Activated CD4-positive, alpha-beta T cell treated with anti-CD3 and anti-CD28 coated beads for 36 hours (primary cell): ENCODE measurements at regions of chr11 and their contacts with region 1.

Region 1: GRCh38 chr11:116787786-116788486 is at the start of gene ZPR1:
- DNase-seq: peak; percentile 90
- ATAC-seq: peak; percentile 76
- H3K4me3 Mint-ChIP-seq: peak within 1 kb of the TSS; percentile 96
- H3K27ac Mint-ChIP-seq: peak within 1 kb of the TSS; percentile 88
- H3K4me1 Mint-ChIP-seq: peaks cover 52% of the 10 kb centered on the region
- H3K27me3 Mint-ChIP-seq: no peaks in the 10 kb centered on the region
- total RNA-seq, gene ZPR1: 88.8 to 106 TPM

Region 2: DNA sequence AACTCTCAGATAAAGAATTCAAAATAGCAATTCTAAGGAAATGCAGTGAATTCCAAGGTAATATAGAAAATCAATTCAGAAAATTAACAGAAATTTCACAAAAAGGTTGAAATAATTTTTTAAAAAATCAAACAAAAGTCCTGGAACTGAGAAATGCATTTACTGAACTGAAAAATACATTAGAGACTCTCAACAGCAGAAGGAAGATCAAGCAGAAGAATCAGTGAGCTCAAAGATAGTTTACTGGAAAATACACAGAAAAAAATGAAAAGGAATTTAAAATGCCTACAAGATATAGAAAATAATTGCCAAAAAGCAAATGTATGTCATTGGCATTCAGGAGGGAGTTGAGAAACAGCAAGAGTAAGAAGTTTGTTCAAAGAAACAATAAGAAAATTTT is 122.4 kb before region 1 on chr11:
- CTCF ChIA-PET with region 1: no interaction called
- POLR2A ChIA-PET with region 1: no interaction called
- intact Hi-C with region 1: no loop called
- DNase-seq: no peak
- ATAC-seq: no peak
- H3K4me3 Mint-ChIP-seq: no peak overlapping the region
- H3K27ac Mint-ChIP-seq: no peak overlapping the region
- H3K4me1 Mint-ChIP-seq: no peaks in the 10 kb centered on the region
- H3K27me3 Mint-ChIP-seq: peaks cover 42% of the 10 kb centered on the region

Region 3: DNA sequence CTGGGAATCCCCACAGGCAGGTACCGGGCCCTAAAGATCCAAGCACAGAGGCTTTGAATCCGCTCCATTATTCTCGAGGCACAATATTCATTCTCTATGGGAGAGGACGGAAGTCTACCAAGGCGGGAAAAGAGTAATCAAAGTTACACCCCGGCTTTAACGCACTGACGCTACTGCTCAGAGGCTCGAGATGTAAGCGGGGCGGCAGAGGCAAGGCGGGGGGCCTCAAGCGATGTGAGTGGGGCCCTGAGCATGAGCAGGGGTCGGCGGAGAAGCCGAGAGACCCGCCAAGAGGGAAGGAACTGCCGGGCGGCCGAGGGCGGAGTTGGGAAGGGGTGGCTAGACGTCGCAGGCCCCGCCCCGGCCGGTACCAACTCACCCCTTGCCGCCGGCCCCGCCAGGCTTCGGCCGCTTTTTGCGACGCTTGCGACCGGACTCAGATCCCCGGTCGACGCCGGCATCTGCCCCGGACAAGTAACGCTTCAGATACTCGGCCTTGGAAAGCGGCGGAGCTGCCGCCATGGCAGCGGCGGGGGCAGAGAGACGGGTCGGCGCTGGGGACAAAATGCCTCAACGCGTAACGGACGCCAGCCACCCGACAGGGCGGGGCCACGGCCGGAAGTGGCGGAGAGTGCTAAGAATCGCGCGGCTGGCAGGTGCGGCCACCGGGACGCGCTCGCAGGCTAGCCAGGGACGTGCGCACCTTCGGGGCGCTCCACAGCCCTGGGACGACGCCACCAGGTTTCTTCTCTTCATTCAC is 15.3 kb before region 1 on chr11 and contains the start of gene BUD13:
- CTCF ChIA-PET with region 1: interaction called, 25 read pairs
- POLR2A ChIA-PET with region 1: interaction called, 3 read pairs
- intact Hi-C with region 1: loop called (anchors 1 kb)
- DNase-seq: peak; percentile 97
- ATAC-seq: peak; percentile 91
- H3K4me3 Mint-ChIP-seq: peak within 1 kb of the TSS; percentile 95
- H3K27ac Mint-ChIP-seq: peak within 1 kb of the TSS; percentile 98
- H3K4me1 Mint-ChIP-seq: peaks cover 56% of the 10 kb centered on the region
- H3K27me3 Mint-ChIP-seq: no peaks in the 10 kb centered on the region
- total RNA-seq, gene BUD13: 30.2 to 35.6 TPM

Region 4: GRCh38 chr11:116813781-116814471 is 26.0 kb after region 1 on chr11:
- CTCF ChIA-PET with region 1: interaction called, 10 read pairs
- POLR2A ChIA-PET with region 1: no interaction called
- intact Hi-C with region 1: no loop called
- DNase-seq: no peak
- ATAC-seq: no peak
- H3K4me3 Mint-ChIP-seq: no peak overlapping the region
- H3K27ac Mint-ChIP-seq: no peak overlapping the region
- H3K4me1 Mint-ChIP-seq: no peaks in the 10 kb centered on the region
- H3K27me3 Mint-ChIP-seq: no peaks in the 10 kb centered on the region

Region 5: GRCh38 chr11:116879800-116880625 is 92.1 kb after region 1 on chr11:
- CTCF ChIA-PET with region 1: interaction called, 13 read pairs
- POLR2A ChIA-PET with region 1: no interaction called
- intact Hi-C with region 1: no loop called
- DNase-seq: no peak
- ATAC-seq: peak; percentile 65
- H3K4me3 Mint-ChIP-seq: no peak overlapping the region
- H3K27ac Mint-ChIP-seq: no peak overlapping the region
- H3K4me1 Mint-ChIP-seq: peaks cover 22% of the 10 kb centered on the region
- H3K27me3 Mint-ChIP-seq: no peaks in the 10 kb centered on the region

Region 6: GRCh38 chr11:117107701-117108590 is 320.0 kb after region 1 on chr11:
- CTCF ChIA-PET with region 1: interaction called, 72 read pairs
- POLR2A ChIA-PET with region 1: no interaction called
- intact Hi-C with region 1: loop called (anchors 1 kb)
- DNase-seq: no peak
- ATAC-seq: no peak
- H3K4me3 Mint-ChIP-seq: no peak overlapping the region
- H3K27ac Mint-ChIP-seq: no peak overlapping the region
- H3K4me1 Mint-ChIP-seq: no peaks in the 10 kb centered on the region
- H3K27me3 Mint-ChIP-seq: no peaks in the 10 kb centered on the region

Region 7: DNA sequence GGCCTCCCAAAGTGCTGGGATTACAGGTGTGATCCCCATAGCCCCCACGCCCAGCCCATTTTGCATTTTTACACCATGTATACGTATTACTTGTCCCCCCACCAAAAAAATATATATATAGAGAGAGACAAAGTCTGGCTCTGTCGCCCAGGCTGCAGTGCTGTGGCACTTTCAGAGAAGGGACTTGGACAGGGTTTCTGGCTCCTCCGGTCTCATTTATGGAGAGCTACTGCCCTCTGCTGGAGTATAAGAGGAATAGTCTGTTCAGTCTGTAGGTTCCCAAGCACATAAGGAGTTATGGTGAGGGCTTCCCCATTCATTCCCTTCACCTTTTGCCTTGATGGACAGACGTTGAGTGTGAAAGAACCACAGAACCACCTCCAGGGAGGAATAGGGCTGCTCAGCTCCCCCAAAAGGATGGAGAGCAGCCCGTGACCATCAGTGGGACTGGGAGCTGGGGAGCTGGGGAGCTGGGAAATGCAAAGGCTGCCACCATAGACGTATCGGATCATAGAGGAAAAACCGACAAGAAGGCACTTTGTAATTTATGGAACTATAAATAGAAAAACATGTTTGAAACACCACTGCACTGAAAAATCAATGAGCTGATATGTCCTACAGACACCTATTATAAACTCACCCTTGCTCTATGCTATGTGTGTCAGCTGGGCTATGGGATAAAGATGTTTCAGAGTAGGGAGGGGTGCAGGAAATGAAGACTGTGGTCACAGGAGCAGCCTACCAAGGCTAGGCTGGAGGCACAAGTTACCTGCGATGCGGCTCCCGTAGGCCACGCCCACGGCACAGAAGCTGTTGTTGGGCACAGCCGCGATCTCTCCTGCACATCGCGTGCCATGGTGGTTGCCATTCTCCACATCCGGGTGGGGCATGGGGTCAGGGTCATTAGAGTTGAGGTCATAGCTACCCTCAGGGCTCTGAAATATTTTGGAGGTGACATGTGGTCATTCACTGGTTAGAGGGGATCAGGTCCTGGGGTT is 438.8 kb after region 1 on chr11:
- CTCF ChIA-PET with region 1: interaction called, 12 read pairs
- POLR2A ChIA-PET with region 1: interaction called, 3 read pairs
- intact Hi-C with region 1: loop called (anchors 1 to 5 kb)
- DNase-seq: peak; percentile 59
- ATAC-seq: peak; percentile 52
- H3K4me3 Mint-ChIP-seq: no peak overlapping the region
- H3K27ac Mint-ChIP-seq: peak overlapping the region; percentile 25
- H3K4me1 Mint-ChIP-seq: peaks cover 30% of the 10 kb centered on the region
- H3K27me3 Mint-ChIP-seq: no peaks in the 10 kb centered on the region